Gastrocnemius medialis (tissue), 4 donors: ENCODE measurements at regions of chr9 and their contacts with region 1.

Region 1: GRCh38 chr9:69035438-69036308 is at the start of gene FXN:
- DNase-seq: peak; percentile 45 to 75
- ATAC-seq: peak; percentile 96 to 97
- H3K4me3 ChIP-seq: peak within 1 kb of the TSS; percentile 55 to 83 (median 72)
- H3K27ac ChIP-seq: peak within 1 kb of the TSS; percentile 69 to 93 (median 89)
- H3K4me1 ChIP-seq: peaks cover 2 to 10% of the 10 kb centered on the region in 2 donors
- H3K27me3 ChIP-seq: no peaks in the 10 kb centered on the region
- CTCF ChIP-seq: peak; percentile 93 to 100 (median 97)
- POLR2A ChIP-seq: peak; percentile 19 to 46
- total RNA-seq, gene FXN: 5.5 to 23.4 (median 14.0) TPM

Region 2: GRCh38 chr9:68779558-68780384 is 255.9 kb before region 1 on chr9:
- in situ Hi-C with region 1: no loop called
- intact Hi-C with region 1: loop called (anchors 1 kb)
- DNase-seq: peak; percentile 87 to 91
- ATAC-seq: peak; percentile 87 to 89
- H3K4me3 ChIP-seq: peak overlapping the region; percentile 88 to 93 (median 91)
- H3K27ac ChIP-seq: peak overlapping the region; percentile 87 to 96 (median 93)
- H3K4me1 ChIP-seq: peaks cover 51 to 69% of the 10 kb centered on the region in 2 donors
- H3K27me3 ChIP-seq: no peaks in the 10 kb centered on the region
- CTCF ChIP-seq: peak in 4 of 5 experiments; percentile 25 to 41 (median 38)
- POLR2A ChIP-seq: peak; percentile 84 to 87

Region 3: GRCh38 chr9:69174616-69175463 is 139.2 kb after region 1 on chr9:
- in situ Hi-C with region 1: no loop called
- intact Hi-C with region 1: loop called (anchors 5 kb)
- DNase-seq: peak; percentile 41 to 55
- ATAC-seq: peak; percentile 58 to 83
- H3K4me3 ChIP-seq: peak overlapping the region; percentile 70 to 89 (median 85)
- H3K27ac ChIP-seq: peak overlapping the region; percentile 83 to 93 (median 85)
- H3K4me1 ChIP-seq: peaks cover 5 to 10% of the 10 kb centered on the region in 2 donors
- H3K27me3 ChIP-seq: no peaks in the 10 kb centered on the region
- CTCF ChIP-seq: no peak
- POLR2A ChIP-seq: peak; percentile 18 to 54

Region 4: GRCh38 chr9:69190086-69190862 is 154.6 kb after region 1 on chr9:
- in situ Hi-C with region 1: no loop called
- intact Hi-C with region 1: loop called (anchors 1 kb)
- DNase-seq: no peak
- ATAC-seq: no peak
- H3K4me3 ChIP-seq: no peak overlapping the region
- H3K27ac ChIP-seq: no peak overlapping the region
- H3K4me1 ChIP-seq: peaks cover 21 to 34% of the 10 kb centered on the region in 2 donors
- H3K27me3 ChIP-seq: no peaks in the 10 kb centered on the region
- CTCF ChIP-seq: no peak
- POLR2A ChIP-seq: no peak

Region 5: GRCh38 chr9:69549310-69550202 is 513.9 kb after region 1 on chr9:
- in situ Hi-C with region 1: no loop called
- intact Hi-C with region 1: loop called (anchors 10 kb)
- DNase-seq: no peak
- ATAC-seq: peak; percentile 62 to 64
- H3K4me3 ChIP-seq: no peak overlapping the region
- H3K27ac ChIP-seq: no peak overlapping the region
- H3K4me1 ChIP-seq: peaks cover 1 to 7% of the 10 kb centered on the region in 2 donors
- H3K27me3 ChIP-seq: no peaks in the 10 kb centered on the region
- CTCF ChIP-seq: peak; percentile 72 to 89 (median 79)
- POLR2A ChIP-seq: no peak